CD4-positive, alpha-beta memory T cell (primary cell): ENCODE measurements at regions of chr3 and their contacts with region 1.

Region 1: DNA sequence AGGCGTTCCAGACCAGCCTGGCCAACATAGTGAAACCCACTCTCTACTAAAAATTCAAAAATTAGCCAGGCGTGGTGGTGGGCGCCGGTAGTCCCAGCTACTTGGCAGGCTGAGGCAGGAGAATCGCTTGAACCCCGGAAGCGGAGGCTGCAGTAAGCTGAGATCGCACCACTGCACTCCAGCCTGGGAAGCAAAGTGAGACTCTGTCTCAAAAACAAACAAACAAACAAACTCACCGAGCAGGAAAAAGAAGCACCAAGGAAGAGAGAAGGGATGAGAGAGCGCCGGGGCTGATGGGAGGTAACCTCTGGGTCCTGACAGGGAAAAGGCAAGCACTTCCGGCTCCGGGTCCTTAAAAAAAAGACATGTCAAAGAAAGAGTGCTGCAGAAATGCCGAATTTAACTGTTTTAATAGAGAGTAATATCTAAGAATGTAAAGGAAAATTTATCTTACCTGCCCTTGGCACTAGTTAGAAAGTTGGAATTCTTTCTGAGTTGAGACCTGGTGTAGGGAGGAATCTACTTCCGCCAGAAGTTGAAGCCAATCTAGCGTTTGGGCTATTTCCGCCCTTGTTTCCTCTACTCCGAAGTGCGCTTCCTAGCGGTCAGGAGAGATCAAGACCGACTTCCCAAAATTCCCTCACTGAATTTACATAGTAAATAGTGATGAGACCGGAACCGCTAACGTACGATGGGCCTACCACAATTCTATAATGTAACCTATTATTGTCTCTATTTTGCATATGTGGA is 29.1 kb downstream of the EFCAB12 start:
- DNase-seq: peak; percentile 83 to 88 (median 84)
- H3K4me3 ChIP-seq: peak overlapping the region; percentile 83 to 95
- H3K4me3 Mint-ChIP-seq: peak overlapping the region; percentile 97 to 100 (median 98)
- H3K27ac ChIP-seq: peak overlapping the region; percentile 70
- H3K27ac Mint-ChIP-seq: peak overlapping the region; percentile 98 to 100 (median 99)
- H3K4me1 ChIP-seq: peaks cover 28% of the 10 kb centered on the region
- H3K4me1 Mint-ChIP-seq: peaks cover 21 to 55% (median 32%) of the 10 kb centered on the region in 4 donors
- H3K27me3 ChIP-seq: no peaks in the 10 kb centered on the region
- H3K27me3 Mint-ChIP-seq: no peaks in the 10 kb centered on the region

Region 2: DNA sequence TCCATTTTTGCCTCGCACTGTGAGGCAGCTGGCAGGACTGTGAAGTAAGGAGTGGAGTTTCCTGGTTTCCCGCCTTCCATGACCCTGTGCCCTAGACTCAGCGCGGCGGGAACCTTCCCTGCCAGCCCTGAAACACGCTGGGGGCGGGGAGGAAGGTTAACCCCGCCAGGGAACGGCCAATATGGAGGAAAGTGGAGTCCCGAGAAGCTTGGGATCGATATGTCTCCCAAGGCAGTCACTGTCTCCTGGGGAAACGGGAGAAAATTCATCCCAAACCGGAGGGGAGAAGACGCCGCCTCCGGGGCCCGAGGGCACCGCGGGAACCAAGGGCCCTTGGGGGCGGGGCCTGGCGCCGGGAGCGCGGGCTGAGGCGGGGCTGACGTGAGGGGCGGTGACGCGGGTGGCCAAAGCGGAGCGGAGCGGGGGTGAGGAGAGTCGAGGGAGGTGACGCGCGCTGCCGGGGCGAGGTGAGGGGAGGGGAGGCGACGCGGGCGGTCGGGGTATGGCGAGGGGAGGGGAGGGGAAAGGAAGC is 120.8 kb before region 1 on chr3 and contains the start of gene HMCES:
- CTCF ChIA-PET with region 1: interaction called, 3 read pairs
- POLR2A ChIA-PET with region 1: interaction called, 3 read pairs
- intact Hi-C with region 1: loop called (anchors 1 kb)
- DNase-seq: peak; percentile 93 to 97 (median 95)
- H3K4me3 ChIP-seq: peak within 1 kb of the TSS; percentile 69 to 85
- H3K4me3 Mint-ChIP-seq: peak within 1 kb of the TSS; percentile 94 to 99 (median 98)
- H3K27ac ChIP-seq: peak within 1 kb of the TSS; percentile 99
- H3K27ac Mint-ChIP-seq: peak within 1 kb of the TSS; percentile 90 to 100 (median 99)
- H3K4me1 ChIP-seq: peaks cover 44% of the 10 kb centered on the region
- H3K4me1 Mint-ChIP-seq: peaks cover 22 to 50% (median 38%) of the 10 kb centered on the region in 4 donors
- H3K27me3 ChIP-seq: no peaks in the 10 kb centered on the region
- H3K27me3 Mint-ChIP-seq: no peaks in the 10 kb centered on the region
- total RNA-seq, gene HMCES: 50.1 to 52.5 TPM

Region 3: GRCh38 chr3:129383292-129383860 is 15.9 kb before region 1 on chr3:
- CTCF ChIA-PET with region 1: interaction called, 17 read pairs
- POLR2A ChIA-PET with region 1: no interaction called
- intact Hi-C with region 1: no loop called
- DNase-seq: peak; percentile 13 to 50 (median 32)
- H3K4me3 ChIP-seq: no peak overlapping the region
- H3K4me3 Mint-ChIP-seq: no peak overlapping the region
- H3K27ac ChIP-seq: no peak overlapping the region
- H3K27ac Mint-ChIP-seq: peak overlapping the region in 1 of 7 donors; percentile 29
- H3K4me1 ChIP-seq: no peaks in the 10 kb centered on the region
- H3K4me1 Mint-ChIP-seq: peaks cover 0 to 3% (median 0%) of the 10 kb centered on the region in 4 donors
- H3K27me3 ChIP-seq: no peaks in the 10 kb centered on the region
- H3K27me3 Mint-ChIP-seq: no peaks in the 10 kb centered on the region

Region 4: GRCh38 chr3:129413687-129414506 is 14.6 kb after region 1 on chr3:
- CTCF ChIA-PET with region 1: interaction called, 14 read pairs
- POLR2A ChIA-PET with region 1: no interaction called
- intact Hi-C with region 1: no loop called
- DNase-seq: no peak
- H3K4me3 ChIP-seq: no peak overlapping the region
- H3K4me3 Mint-ChIP-seq: no peak overlapping the region
- H3K27ac ChIP-seq: no peak overlapping the region
- H3K27ac Mint-ChIP-seq: no peak overlapping the region
- H3K4me1 ChIP-seq: no peaks in the 10 kb centered on the region
- H3K4me1 Mint-ChIP-seq: no peaks in the 10 kb centered on the region
- H3K27me3 ChIP-seq: no peaks in the 10 kb centered on the region
- H3K27me3 Mint-ChIP-seq: peaks cover 0 to 2% of the 10 kb centered on the region in 2 donors

Region 5: GRCh38 chr3:129428376-129429079 is 29.2 kb after region 1 on chr3 and contains the start of gene EFCAB12:
- CTCF ChIA-PET with region 1: interaction called, 9 read pairs
- POLR2A ChIA-PET with region 1: interaction called, 4 read pairs
- intact Hi-C with region 1: loop called (anchors 1 kb)
- DNase-seq: peak; percentile 84 to 90 (median 87)
- H3K4me3 ChIP-seq: peak within 1 kb of the TSS; percentile 49 to 50
- H3K4me3 Mint-ChIP-seq: peak within 1 kb of the TSS; percentile 86 to 91 (median 88)
- H3K27ac ChIP-seq: peak within 1 kb of the TSS; percentile 19
- H3K27ac Mint-ChIP-seq: peak within 1 kb of the TSS; percentile 79 to 93 (median 89)
- H3K4me1 ChIP-seq: peaks cover 15% of the 10 kb centered on the region
- H3K4me1 Mint-ChIP-seq: peaks cover 12 to 22% (median 18%) of the 10 kb centered on the region in 4 donors
- H3K27me3 ChIP-seq: no peaks in the 10 kb centered on the region
- H3K27me3 Mint-ChIP-seq: no peaks in the 10 kb centered on the region
- total RNA-seq, gene EFCAB12: 1.5 to 1.6 TPM